ENCODE measurements at regions of chr18 and their contacts with region 1.

Region 1: GRCh38 chr18:48445540-48445939 is 36.4 kb upstream of the ZBTB7C start:
- DNase-seq: peak; percentile 43 to 75
- ATAC-seq: peak; percentile 74 to 88; a peak in 5 of 6 replicates
- H3K4me3 ChIP-seq: no peak overlapping the region
- H3K27ac ChIP-seq: no peak overlapping the region
- H3K4me1 ChIP-seq: peaks cover 2% of the 10 kb centered on the region; the same call in 1 of the 3 replicates
- CTCF ChIP-seq: peak; percentile 59
- EP300 ChIP-seq: no peak
- POLR2A ChIP-seq: no peak
- RAD21 ChIP-seq: peak; percentile 47 to 67

Region 2: DNA sequence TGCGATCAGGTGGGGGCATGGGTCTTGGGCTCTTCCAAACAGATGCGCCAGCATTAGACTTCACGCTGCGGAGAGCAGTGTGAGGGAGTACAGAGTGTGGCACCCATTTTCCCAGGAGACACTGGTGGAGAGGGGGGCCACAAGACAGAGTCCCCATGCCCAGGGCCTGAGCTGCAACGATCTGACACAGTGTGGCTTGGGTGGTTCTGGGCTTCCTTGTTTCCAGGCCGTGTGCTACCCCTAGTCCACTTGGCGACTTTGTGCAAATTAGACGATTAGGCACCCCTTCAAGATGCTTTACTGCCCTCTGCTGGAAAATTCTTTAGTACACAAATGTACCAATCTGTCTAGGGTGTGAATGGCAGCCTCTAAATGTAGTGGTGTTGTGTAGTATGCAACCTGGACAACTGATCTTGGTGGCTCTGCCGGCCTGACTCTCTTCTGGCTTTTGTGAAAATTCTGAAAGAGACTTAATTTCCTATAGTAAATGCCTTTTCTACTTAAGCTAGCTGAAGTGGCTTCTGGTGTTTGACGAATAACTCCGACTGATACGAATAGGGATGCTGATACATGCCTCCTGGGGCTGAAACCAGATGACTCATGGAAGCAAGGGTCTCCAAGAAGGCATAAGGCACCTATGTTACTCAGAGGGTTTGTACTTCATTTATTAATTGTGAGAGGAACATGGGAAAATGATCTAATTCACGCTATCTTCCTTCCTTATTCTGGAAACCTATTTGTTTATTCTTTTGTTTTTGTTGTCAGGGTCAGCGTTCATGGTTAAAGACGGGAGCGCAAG is 422.8 kb before region 1 on chr18:
- CTCF ChIA-PET with region 1: interaction called, 175 read pairs
- POLR2A ChIA-PET with region 1: no interaction called
- DNase-seq: peak; percentile 68 to 82
- ATAC-seq: peak; percentile 75 to 89
- H3K4me3 ChIP-seq: no peak overlapping the region
- H3K27ac ChIP-seq: peak overlapping the region; percentile 81 to 91
- H3K4me1 ChIP-seq: peaks cover 59% of the 10 kb centered on the region
- CTCF ChIP-seq: peak; percentile 65
- EP300 ChIP-seq: no peak
- POLR2A ChIP-seq: no peak
- RAD21 ChIP-seq: peak; percentile 82 to 88

Region 3: DNA sequence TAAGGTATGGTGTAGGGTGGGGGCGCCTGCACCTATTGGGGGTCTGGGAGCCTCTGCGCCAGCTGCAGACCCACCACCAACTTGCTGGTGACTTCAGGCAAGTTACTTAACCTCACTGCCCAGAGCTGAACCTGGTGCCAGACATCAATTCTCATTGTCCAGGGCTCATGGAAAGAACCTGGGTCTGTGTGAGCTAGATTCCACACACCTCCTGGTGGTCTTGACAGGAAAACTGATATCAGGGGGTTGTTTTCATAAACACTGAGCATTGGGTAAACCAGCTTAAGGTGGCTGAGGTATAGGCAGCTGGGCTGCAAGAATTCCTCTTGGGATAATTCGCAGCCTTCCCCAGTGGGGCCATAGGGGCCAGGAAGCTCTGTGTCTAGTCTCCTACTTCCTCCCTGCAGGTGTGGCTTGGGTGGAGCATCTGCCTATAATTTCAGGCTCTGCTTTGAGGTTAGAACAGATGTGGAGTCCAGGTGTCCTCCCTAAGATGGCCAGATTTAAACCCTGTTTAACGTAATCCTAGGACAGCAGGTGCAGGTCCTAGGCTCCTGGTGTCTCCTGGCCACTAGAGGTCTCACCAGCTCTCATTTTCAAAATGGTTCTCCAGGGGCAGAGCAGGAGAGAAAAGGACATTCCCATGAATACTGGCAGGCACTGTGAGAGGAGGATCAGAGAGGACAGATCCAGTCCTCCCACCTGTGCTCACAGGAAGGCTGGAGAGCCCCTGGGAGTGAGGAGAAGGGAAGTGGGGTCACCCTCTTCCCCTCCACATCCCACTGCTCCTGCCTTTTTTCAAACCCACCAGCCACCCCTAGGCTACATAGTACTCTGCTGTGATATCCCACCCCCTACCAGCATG is 414.7 kb before region 1 on chr18:
- CTCF ChIA-PET with region 1: interaction called, 175 read pairs
- POLR2A ChIA-PET with region 1: no interaction called
- DNase-seq: peak; percentile 40 to 63
- ATAC-seq: peak; percentile 88 to 94
- H3K4me3 ChIP-seq: no peak overlapping the region
- H3K27ac ChIP-seq: peak overlapping the region in 1 of 2 experiments; percentile 48; a peak in 1 of 6 replicates
- H3K4me1 ChIP-seq: peaks cover 23% of the 10 kb centered on the region
- CTCF ChIP-seq: peak; percentile 70
- EP300 ChIP-seq: no peak
- POLR2A ChIP-seq: no peak
- RAD21 ChIP-seq: peak; percentile 74 to 76

Region 4: DNA sequence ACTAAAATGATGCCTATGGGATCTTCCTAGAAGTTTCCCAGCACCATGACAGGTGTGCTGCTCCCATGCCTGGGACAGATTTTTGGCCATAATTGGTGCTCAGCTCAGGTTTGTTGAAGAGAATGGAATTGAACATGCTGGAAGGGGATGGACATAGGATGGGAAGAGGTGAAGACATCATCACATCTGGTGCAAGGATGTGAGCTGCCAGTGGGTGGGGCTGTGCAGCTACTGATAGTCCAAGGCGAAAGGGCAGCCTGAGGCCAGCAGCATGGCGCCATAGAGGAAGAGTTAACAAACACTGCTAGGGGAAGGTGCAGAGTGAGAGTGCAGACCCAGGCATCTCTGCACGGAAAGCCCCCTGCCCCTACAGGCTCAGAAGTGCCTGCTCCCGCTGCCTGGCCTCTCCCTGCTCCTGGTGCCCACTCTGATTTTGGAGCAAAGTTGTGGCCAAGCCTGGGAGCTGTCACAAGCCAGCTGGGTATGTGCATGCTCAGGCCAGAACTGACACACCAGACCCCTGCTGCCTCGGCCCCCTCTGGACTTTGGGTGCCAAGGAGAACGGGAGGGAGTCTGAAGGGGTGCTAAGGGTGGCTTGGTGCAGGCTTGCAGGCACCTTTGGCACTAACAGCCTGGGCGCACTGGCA is 214.9 kb before region 1 on chr18:
- CTCF ChIA-PET with region 1: interaction called, 47 read pairs
- POLR2A ChIA-PET with region 1: no interaction called
- DNase-seq: peak; percentile 66 to 76
- ATAC-seq: peak; percentile 90 to 99
- H3K4me3 ChIP-seq: no peak overlapping the region
- H3K27ac ChIP-seq: peak overlapping the region in 1 of 2 experiments; percentile 46; a peak in 2 of 6 replicates
- H3K4me1 ChIP-seq: peaks cover 6% of the 10 kb centered on the region; the same call in 1 of the 3 replicates
- CTCF ChIP-seq: peak; percentile 49
- EP300 ChIP-seq: no peak
- POLR2A ChIP-seq: no peak
- RAD21 ChIP-seq: peak; percentile 72 to 83

Region 5: GRCh38 chr18:48428475-48429177 is 16.9 kb before region 1 on chr18:
- CTCF ChIA-PET with region 1: interaction called, 14 read pairs
- POLR2A ChIA-PET with region 1: no interaction called
- DNase-seq: no peak
- ATAC-seq: no peak
- H3K4me3 ChIP-seq: no peak overlapping the region
- H3K27ac ChIP-seq: no peak overlapping the region
- H3K4me1 ChIP-seq: no peaks in the 10 kb centered on the region
- CTCF ChIP-seq: no peak
- EP300 ChIP-seq: no peak
- POLR2A ChIP-seq: no peak
- RAD21 ChIP-seq: no peak

Region 6: GRCh38 chr18:48455555-48456478 is 10.3 kb after region 1 on chr18:
- CTCF ChIA-PET with region 1: interaction called, 119 read pairs
- POLR2A ChIA-PET with region 1: no interaction called
- DNase-seq: no peak
- ATAC-seq: no peak
- H3K4me3 ChIP-seq: no peak overlapping the region
- H3K27ac ChIP-seq: no peak overlapping the region
- H3K4me1 ChIP-seq: peaks cover 3% of the 10 kb centered on the region; the same call in 1 of the 3 replicates
- CTCF ChIP-seq: no peak
- EP300 ChIP-seq: no peak
- POLR2A ChIP-seq: no peak
- RAD21 ChIP-seq: no peak